OCI-LY7 (cell line): ENCODE measurements at regions of chr5 and their contacts with region 1.

Region 1: GRCh38 chr5:95646554-95647431 is at the start of gene RFESD:
- DNase-seq: peak; percentile 98
- H3K4me3 ChIP-seq: peak within 1 kb of the TSS; percentile 78
- H3K27ac ChIP-seq: peak within 1 kb of the TSS; percentile 75
- H3K4me1 ChIP-seq: peaks cover 33% of the 10 kb centered on the region
- CTCF ChIP-seq: 0 out of 2 replicates have a peak, but pooled peaks have one; percentile 33
- total RNA-seq, gene RFESD: 7.6 and 9.9 TPM in 2 replicates

Region 2: DNA sequence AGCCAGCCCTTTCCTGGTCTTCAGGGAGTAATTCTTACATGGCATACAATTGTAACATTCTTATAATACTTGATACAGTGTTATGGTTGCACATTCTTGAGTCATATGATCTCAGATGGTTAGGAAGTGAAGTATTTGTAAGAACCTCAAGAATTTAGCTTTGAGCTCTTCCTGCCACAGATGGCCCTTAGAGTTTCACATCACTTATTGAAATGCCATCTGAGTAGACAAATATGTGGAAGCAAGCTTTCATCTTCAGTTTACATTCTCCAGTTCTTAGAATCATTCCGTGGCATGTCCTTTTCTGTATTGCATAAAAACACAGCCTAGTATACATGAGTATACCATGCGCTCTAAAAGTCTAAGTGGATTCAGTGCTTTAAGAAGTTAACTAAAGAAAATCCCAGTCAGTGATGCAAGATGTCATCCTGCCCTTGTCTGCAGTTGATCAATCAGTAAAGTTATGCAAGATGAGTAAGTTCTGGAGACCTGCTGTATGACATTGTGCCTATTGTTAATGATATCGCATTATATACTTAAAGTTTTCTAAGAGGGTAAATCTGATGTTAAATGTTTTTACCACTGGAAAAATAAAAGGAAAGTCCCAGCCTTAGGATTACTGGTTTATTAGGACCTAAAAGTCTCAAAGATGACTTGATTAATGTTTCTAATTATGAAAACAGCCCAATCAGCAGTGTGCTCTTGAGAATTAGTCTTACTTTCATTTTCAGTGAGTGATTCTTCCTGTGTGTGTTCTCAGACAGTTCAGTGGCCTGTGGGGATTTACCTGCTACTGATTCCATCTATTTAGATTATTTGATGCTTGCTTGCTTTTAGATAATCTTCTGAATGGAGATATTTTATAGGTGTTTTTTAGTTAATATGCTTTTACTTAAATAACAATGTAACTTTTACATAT is 113.7 kb after region 1 on chr5:
- CTCF ChIA-PET with region 1: interaction called, 3 read pairs
- POLR2A ChIA-PET with region 1: interaction called, 3 read pairs
- intact Hi-C with region 1: loop called (anchors 1 kb)
- DNase-seq: peak; percentile 71
- H3K4me3 ChIP-seq: peak overlapping the region; percentile 62
- H3K27ac ChIP-seq: peak overlapping the region; percentile 72
- H3K4me1 ChIP-seq: peaks cover 32% of the 10 kb centered on the region
- CTCF ChIP-seq: no peak

Region 3: GRCh38 chr5:95822542-95823181 is 175.9 kb after region 1 on chr5 and contains the start of gene GLRX:
- CTCF ChIA-PET with region 1: no interaction called
- POLR2A ChIA-PET with region 1: interaction called, 12 read pairs
- intact Hi-C with region 1: no loop called
- DNase-seq: peak; percentile 82
- H3K4me3 ChIP-seq: peak within 1 kb of the TSS; percentile 91
- H3K27ac ChIP-seq: peak within 1 kb of the TSS; percentile 87
- H3K4me1 ChIP-seq: peaks cover 57% of the 10 kb centered on the region
- CTCF ChIP-seq: no peak
- total RNA-seq, gene GLRX: 26.7 and 80.5 TPM in 2 replicates

Region 4: GRCh38 chr5:95846554-95847260 is 199.9 kb after region 1 on chr5:
- CTCF ChIA-PET with region 1: no interaction called
- POLR2A ChIA-PET with region 1: interaction called, 5 read pairs
- intact Hi-C with region 1: loop called (anchors 1 kb)
- DNase-seq: peak; percentile 81
- H3K4me3 ChIP-seq: no peak overlapping the region
- H3K27ac ChIP-seq: no peak overlapping the region
- H3K4me1 ChIP-seq: peaks cover 6% of the 10 kb centered on the region
- CTCF ChIP-seq: peak; percentile 99

Region 5: GRCh38 chr5:97183100-97183929 is 1536.5 kb after region 1 on chr5 and contains the start of gene RIOK2:
- CTCF ChIA-PET with region 1: no interaction called
- POLR2A ChIA-PET with region 1: no interaction called
- intact Hi-C with region 1: loop called (anchors 5 kb)
- DNase-seq: peak; percentile 98
- H3K4me3 ChIP-seq: peak within 1 kb of the TSS; percentile 96
- H3K27ac ChIP-seq: peak within 1 kb of the TSS; percentile 88
- H3K4me1 ChIP-seq: peaks cover 27% of the 10 kb centered on the region
- CTCF ChIP-seq: peak; percentile 19; the same call in 1 of the 2 replicates
- total RNA-seq, gene RIOK2: 21.9 and 44.7 TPM in 2 replicates